AG04450 (cell line): ENCODE measurements at regions of chr2 and their contacts with region 1.

Region 1: DNA sequence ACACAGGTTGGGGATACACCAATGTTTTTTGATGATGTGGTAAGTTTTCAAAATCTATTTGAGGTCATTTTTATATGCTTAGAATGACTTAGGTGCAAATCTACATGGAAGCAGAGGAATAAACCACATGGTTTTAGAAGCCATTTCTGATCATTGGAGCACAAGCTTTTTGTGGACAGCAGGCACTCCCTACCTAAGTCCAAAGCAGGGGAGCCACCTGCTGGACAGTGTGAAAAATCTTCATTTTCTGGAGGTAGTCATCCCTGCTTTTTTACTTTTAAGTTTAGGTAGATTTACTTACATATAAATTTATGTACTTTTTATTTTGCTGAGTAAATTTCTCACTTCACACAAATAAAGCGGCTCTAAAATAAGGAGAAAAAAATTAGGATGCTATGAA is 323.2 kb downstream of the PLCL1 start:
- DNase-seq: peak; percentile 38
- H3K4me3 ChIP-seq: no peak overlapping the region
- H3K27ac ChIP-seq: no peak overlapping the region
- H3K27me3 ChIP-seq: no peaks in the 10 kb centered on the region
- CTCF ChIP-seq: peak; percentile 76

Region 2: DNA sequence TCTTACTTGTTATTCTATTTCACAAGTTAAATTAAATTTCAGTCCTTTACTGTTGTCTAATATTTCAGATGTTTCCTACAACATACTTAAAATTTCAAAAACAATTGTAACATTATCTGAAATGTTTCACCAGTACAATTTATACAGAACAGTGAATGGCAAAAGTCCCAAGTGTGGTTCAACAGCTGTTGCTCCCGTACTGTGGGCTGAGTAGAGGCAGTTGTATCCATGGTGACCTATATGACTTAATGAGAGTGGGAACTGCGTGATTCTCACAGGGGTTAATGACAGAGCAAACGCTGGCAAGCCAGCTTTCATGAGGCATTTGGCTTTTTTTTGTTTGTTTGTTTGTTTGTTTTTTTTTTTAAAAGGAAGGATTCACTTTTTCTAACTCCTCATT is 328.6 kb before region 1 on chr2:
- CTCF ChIA-PET with region 1: interaction called, 22 read pairs
- POLR2A ChIA-PET with region 1: no interaction called
- DNase-seq: no peak
- H3K4me3 ChIP-seq: no peak overlapping the region
- H3K27ac ChIP-seq: no peak overlapping the region
- H3K27me3 ChIP-seq: peaks cover 8% of the 10 kb centered on the region
- CTCF ChIP-seq: no peak

Region 3: GRCh38 chr2:197804049-197804757 is 323.4 kb before region 1 on chr2 and contains the start of gene PLCL1:
- CTCF ChIA-PET with region 1: interaction called, 22 read pairs
- POLR2A ChIA-PET with region 1: no interaction called
- DNase-seq: peak; percentile 80
- H3K4me3 ChIP-seq: peak within 1 kb of the TSS; percentile 66
- H3K27ac ChIP-seq: no peak within 1 kb of the TSS
- H3K27me3 ChIP-seq: peaks cover 13% of the 10 kb centered on the region
- CTCF ChIP-seq: no peak
- polyA plus RNA-seq, gene PLCL1: 0.22 and 0.43 TPM in 2 replicates

Region 4: DNA sequence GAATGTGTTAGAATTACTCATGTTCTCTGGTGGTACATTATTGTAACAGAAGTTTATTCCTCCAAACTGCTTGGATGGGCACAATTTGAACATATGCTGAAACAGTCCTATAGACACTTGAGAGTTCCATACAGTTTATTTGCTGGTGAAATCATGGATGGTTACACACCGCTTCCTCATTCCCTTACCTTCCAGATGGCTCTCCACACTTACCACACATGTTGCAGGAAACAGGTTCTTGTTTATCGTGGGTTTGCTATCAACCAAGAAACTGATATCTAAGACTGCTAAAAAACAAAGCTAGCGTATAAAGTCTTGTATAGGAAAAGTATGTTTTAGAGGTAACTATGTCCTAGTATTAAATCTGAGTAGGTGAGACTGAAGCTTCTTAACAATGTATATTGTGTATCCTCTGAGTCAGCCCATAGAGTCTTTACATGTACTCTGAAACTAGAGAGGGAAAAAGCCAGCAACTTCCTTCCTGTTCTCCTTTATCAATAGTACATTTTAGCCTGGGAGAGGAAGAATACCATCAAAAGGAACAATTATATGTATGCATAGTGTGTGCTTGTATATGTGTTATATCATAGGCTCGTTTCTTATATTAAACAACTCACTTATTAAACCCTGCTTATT is 10.1 kb before region 1 on chr2:
- CTCF ChIA-PET with region 1: interaction called, 14 read pairs
- POLR2A ChIA-PET with region 1: no interaction called
- DNase-seq: no peak
- H3K4me3 ChIP-seq: no peak overlapping the region
- H3K27ac ChIP-seq: no peak overlapping the region
- H3K27me3 ChIP-seq: no peaks in the 10 kb centered on the region
- CTCF ChIP-seq: no peak